ENCODE measurements at regions of chr1 and their contacts with region 1.

Region 1: DNA sequence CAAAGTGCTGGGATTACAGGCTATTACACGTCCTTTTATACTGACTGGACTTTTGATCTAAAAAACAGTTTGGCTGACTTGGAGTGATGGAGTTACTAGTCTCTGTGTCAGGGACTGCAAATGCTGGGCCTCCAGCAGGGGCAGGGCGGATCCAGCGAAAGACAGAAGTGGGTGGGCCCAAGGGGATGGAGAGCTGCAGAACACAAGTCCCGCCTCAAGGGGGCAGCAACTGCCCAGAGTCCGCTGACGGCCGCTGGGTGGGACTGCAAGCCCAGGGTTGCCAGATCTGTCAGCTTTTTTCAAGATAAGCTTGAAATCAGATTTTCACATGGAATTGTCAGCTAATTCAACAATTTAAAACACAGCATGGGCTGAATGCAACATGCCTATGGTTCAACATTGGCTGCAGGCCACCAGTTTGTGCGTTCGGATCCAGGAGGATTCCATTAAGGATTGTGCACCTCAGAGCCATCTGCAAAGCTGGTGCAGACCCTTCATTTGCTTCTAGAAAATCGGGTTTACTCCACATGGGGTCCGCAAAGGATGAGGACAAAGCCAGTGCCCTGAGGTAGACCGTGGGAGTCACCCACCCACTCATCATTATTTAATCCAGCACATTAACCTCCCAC is 10.7 kb downstream of the STMN1 start:
- DNase-seq: peak; percentile 73 to 81
- ATAC-seq: peak; percentile 86 to 95
- H3K4me3 ChIP-seq: peak overlapping the region in 1 of 4 donors; percentile 9
- H3K27ac ChIP-seq: peak overlapping the region in 1 of 4 donors; percentile 43
- H3K4me1 ChIP-seq: peaks cover 9 to 12% of the 10 kb centered on the region in 2 donors
- H3K27me3 ChIP-seq: no peaks in the 10 kb centered on the region
- CTCF ChIP-seq: peak; percentile 95 to 99 (median 97)
- POLR2A ChIP-seq: no peak

Region 2: DNA sequence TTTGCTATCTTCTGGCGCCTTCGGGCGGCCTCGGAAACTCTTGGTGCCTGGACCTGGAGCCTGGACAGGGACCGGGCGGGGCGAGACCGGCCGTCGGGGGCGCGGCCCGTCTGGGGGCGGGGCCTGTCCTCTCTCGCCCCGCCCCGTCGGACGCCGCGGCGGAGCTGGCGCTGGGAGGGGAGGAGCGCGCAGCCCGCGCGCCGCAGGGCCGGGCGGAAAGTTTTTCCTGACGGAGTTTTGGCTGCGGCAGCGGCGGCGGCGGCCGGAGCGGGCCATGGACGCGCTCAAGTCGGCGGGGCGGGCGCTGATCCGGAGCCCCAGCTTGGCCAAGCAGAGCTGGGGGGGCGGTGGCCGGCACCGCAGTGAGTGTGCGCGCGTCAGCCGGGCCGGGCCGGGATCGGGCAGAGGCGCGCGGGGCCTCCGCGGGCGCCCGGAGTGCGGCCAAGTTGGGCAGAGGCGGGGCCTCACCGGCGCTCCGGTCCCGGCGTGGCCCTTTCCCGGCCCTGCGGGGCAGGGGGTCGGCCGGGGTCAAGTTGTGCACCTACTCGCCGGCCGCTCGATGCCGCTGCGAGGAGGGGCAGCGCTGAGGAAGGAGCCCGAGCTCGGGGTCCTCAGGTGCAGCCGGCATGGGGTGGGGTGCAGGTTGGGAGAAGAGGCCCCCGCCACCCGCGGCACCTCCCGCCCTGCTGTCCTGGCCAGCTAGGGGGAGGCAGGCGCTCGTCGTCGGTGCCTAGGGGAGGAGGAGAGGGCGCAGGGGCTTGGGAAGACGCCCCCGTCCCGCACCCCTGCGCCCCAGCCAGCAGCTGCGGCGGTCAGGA is 351.8 kb before region 1 on chr1 and contains the start of gene LDLRAP1:
- in situ Hi-C with region 1: no loop called
- intact Hi-C with region 1: no loop called
- DNase-seq: peak; percentile 48 to 68
- ATAC-seq: peak; percentile 88
- H3K4me3 ChIP-seq: peak within 1 kb of the TSS; percentile 76 to 95 (median 89)
- H3K27ac ChIP-seq: peak within 1 kb of the TSS; percentile 82 to 97 (median 93)
- H3K4me1 ChIP-seq: peaks cover 25 to 29% of the 10 kb centered on the region in 2 donors
- H3K27me3 ChIP-seq: no peaks in the 10 kb centered on the region
- CTCF ChIP-seq: no peak
- POLR2A ChIP-seq: peak; percentile 98 to 99
- total RNA-seq, gene LDLRAP1: 10.0 to 17.9 (median 14.2) TPM

Region 3: DNA sequence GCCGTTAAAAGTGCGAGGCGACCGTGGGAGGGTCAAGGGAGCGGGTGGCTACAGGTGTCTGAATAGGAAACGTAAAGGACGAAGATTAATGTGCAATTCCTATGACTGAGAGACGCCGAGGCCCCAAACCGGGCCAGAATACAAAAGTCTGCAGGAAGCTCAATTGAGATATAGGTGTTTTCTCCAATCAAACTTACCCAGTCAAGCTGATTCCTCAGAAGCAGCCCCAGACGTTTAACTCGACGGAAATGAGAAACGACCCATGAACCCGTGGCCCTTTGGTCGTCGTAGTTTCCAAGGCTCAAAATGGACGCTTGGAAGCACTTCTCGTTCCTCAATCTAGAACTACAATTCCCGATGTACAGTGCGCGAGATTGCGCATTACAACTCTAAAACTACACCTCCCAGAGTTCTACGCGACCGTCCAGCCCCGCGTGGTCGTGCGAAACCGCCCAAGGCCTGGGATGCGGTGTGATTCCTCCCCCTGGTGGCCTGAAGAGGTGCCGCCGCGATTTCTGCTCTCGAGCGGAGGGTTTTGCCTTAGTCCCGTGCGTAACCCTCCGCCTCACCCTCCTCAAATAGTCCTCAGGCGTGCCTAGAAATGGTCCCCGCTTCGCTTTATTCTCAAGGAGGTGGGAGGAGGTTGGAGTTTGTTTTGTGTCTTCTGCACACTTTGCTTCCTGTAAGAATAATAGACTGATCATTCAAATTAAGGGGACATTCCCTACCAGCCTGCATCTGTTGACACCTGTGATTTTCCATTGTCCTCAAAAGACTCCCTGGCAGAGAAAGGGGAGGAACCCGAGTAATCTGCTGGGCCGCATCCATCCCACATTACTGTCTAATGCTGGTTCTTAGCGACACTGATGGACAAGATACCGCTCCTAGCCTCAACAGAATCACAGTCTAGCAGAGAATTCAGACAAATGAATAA is 102.6 kb after region 1 on chr1 and contains the start of gene PAFAH2:
- in situ Hi-C with region 1: loop called (anchors 5 to 10 kb)
- intact Hi-C with region 1: loop called (anchors 1 kb)
- DNase-seq: peak; percentile 97 to 98
- ATAC-seq: peak; percentile 96 to 98
- H3K4me3 ChIP-seq: peak within 1 kb of the TSS; percentile 57 to 86 (median 73)
- H3K27ac ChIP-seq: peak within 1 kb of the TSS; percentile 88 to 96 (median 92)
- H3K4me1 ChIP-seq: peaks cover 17 to 25% of the 10 kb centered on the region in 2 donors
- H3K27me3 ChIP-seq: no peaks in the 10 kb centered on the region
- CTCF ChIP-seq: peak; percentile 94 to 100 (median 99)
- POLR2A ChIP-seq: peak in 1 of 2 donors; percentile 63
- total RNA-seq, gene PAFAH2: 9.0 to 35.5 (median 16.1) TPM

Region 4: GRCh38 chr1:26003262-26003661 is 107.8 kb after region 1 on chr1:
- in situ Hi-C with region 1: loop called (anchors 5 to 10 kb)
- intact Hi-C with region 1: loop called (anchors 1 kb)
- DNase-seq: no peak
- ATAC-seq: no peak
- H3K4me3 ChIP-seq: no peak overlapping the region
- H3K27ac ChIP-seq: no peak overlapping the region
- H3K4me1 ChIP-seq: peaks cover 0 to 5% of the 10 kb centered on the region in 2 donors
- H3K27me3 ChIP-seq: no peaks in the 10 kb centered on the region
- CTCF ChIP-seq: no peak
- POLR2A ChIP-seq: no peak

Region 5: GRCh38 chr1:26145041-26145959 is 249.8 kb after region 1 on chr1:
- in situ Hi-C with region 1: loop called in 2 of 4 experiments (anchors 25 kb)
- intact Hi-C with region 1: no loop called
- DNase-seq: peak; percentile 64 to 78
- ATAC-seq: peak; percentile 99 to 100
- H3K4me3 ChIP-seq: no peak overlapping the region
- H3K27ac ChIP-seq: peak overlapping the region in 2 of 4 donors; percentile 37 to 38
- H3K4me1 ChIP-seq: peaks cover 0 to 9% of the 10 kb centered on the region in 2 donors
- H3K27me3 ChIP-seq: no peaks in the 10 kb centered on the region
- CTCF ChIP-seq: peak; percentile 54 to 93 (median 85)
- POLR2A ChIP-seq: no peak

Region 6: DNA sequence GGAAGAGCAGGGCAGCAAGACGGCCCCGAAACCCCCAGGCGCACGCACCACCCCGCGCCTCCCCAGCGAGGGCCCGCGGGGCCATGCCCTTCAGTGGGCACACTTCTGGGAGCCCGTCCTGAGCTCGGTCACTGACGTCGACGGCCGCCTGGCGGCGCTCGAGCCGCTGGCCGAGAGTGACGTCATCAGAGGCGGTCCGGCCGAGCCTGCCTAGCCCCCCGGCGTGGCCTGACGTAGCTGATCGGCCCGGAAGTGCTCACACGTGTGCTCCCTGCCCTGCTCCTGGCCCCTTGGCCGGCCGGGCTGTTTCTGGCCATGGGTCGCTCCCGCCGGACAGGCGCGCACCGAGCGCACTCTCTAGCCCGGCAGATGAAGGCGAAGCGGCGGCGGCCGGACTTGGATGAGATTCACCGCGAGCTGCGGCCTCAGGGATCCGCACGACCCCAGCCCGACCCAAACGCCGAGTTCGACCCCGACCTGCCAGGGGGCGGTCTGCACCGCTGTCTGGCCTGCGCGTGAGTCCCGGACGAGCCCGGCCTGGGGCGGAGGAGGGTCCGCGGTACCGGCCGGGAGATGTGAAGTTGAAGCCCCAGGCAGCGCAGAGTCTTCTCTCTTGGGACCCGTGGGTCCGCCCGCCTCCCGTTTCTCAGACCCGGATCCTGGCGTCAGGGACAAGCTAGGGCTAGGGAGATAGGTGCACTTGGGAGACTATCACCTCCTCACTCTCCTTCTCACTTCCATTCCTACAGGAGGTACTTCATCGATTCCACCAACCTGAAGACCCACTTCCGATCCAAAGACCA is 274.4 kb after region 1 on chr1 and contains the start of gene ZNF593:
- in situ Hi-C with region 1: loop called in 1 of 4 experiments (anchors 25 kb)
- intact Hi-C with region 1: no loop called
- DNase-seq: peak; percentile 91
- ATAC-seq: peak; percentile 91 to 93
- H3K4me3 ChIP-seq: peak within 1 kb of the TSS; percentile 73 to 99 (median 86)
- H3K27ac ChIP-seq: peak within 1 kb of the TSS; percentile 88 to 97 (median 92)
- H3K4me1 ChIP-seq: peaks cover 20 to 26% of the 10 kb centered on the region in 2 donors
- H3K27me3 ChIP-seq: no peaks in the 10 kb centered on the region
- CTCF ChIP-seq: peak; percentile 93 to 97 (median 95)
- POLR2A ChIP-seq: peak; percentile 85 to 91
- total RNA-seq, gene ZNF593: 39.6 to 135 (median 97.3) TPM